Naive thymus-derived CD4-positive, alpha-beta T cell (primary cell): ENCODE measurements at regions of chr3 and their contacts with region 1.

Region 1: DNA sequence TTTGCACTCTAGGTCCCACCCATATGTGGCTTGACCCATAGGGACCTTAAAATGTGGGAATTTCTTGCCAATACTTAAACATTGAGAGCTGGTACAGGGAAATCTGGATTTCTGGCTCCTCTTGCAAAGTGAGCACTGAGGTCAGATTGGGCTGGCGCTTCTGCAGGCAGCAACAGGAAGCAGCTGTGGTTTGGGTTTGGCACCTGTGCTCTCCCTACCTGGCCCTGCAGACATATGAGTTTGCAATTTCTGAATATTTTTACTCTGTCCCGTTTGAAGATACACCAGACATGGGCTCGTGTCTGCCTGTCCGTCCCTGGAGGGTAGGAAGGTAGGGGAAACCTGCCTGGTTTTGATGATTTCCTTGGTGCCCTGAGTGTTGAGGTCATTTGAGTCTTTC is 74.8 kb upstream of the SEC13 start:
- DNase-seq: peak in 6 of 9 donors; percentile 26 to 49 (median 43)
- ATAC-seq: peak; percentile 31
- H3K4me3 ChIP-seq: no peak overlapping the region
- H3K4me3 Mint-ChIP-seq: peak overlapping the region in 8 of 10 donors; percentile 14 to 70 (median 58)
- H3K27ac ChIP-seq: no peak overlapping the region
- H3K27ac Mint-ChIP-seq: peak overlapping the region in 4 of 9 donors; percentile 2 to 69 (median 24)
- H3K4me1 ChIP-seq: peaks cover 27 to 28% of the 10 kb centered on the region in 2 donors
- H3K4me1 Mint-ChIP-seq: peaks cover 8 to 42% (median 30%) of the 10 kb centered on the region in 7 donors
- H3K27me3 ChIP-seq: no peaks in the 10 kb centered on the region
- H3K27me3 Mint-ChIP-seq: no peaks in the 10 kb centered on the region

Region 2: GRCh38 chr3:10417849-10418248 is 22.2 kb after region 1 on chr3:
- CTCF ChIA-PET with region 1: no interaction called
- POLR2A ChIA-PET with region 1: interaction called, 3 read pairs
- intact Hi-C with region 1: loop called in 1 of 2 experiments (anchors 2 kb)
- DNase-seq: peak in 1 of 9 donors; percentile 11
- ATAC-seq: peak; percentile 22
- H3K4me3 ChIP-seq: no peak overlapping the region
- H3K4me3 Mint-ChIP-seq: no peak overlapping the region
- H3K27ac ChIP-seq: no peak overlapping the region
- H3K27ac Mint-ChIP-seq: no peak overlapping the region
- H3K4me1 ChIP-seq: peaks cover 0 to 7% of the 10 kb centered on the region in 2 donors
- H3K4me1 Mint-ChIP-seq: peaks cover 0 to 11% (median 4%) of the 10 kb centered on the region in 7 donors
- H3K27me3 ChIP-seq: no peaks in the 10 kb centered on the region
- H3K27me3 Mint-ChIP-seq: peaks cover 0 to 17% (median 8%) of the 10 kb centered on the region in 5 donors

Region 3: GRCh38 chr3:10437272-10437994 is 41.8 kb after region 1 on chr3:
- CTCF ChIA-PET with region 1: no interaction called
- POLR2A ChIA-PET with region 1: interaction called, 8 read pairs
- intact Hi-C with region 1: loop called in 1 of 2 experiments (anchors 1 kb)
- DNase-seq: peak in 8 of 9 donors; percentile 35 to 79 (median 48)
- ATAC-seq: peak; percentile 89
- H3K4me3 ChIP-seq: no peak overlapping the region
- H3K4me3 Mint-ChIP-seq: peak overlapping the region in 8 of 10 donors; percentile 17 to 72 (median 58)
- H3K27ac ChIP-seq: no peak overlapping the region
- H3K27ac Mint-ChIP-seq: peak overlapping the region; percentile 46 to 92 (median 80)
- H3K4me1 ChIP-seq: peaks cover 17 to 19% of the 10 kb centered on the region in 2 donors
- H3K4me1 Mint-ChIP-seq: peaks cover 18 to 38% (median 27%) of the 10 kb centered on the region in 7 donors
- H3K27me3 ChIP-seq: no peaks in the 10 kb centered on the region
- H3K27me3 Mint-ChIP-seq: no peaks in the 10 kb centered on the region